ENCODE measurements at regions of chr7 and their contacts with region 1.

Region 1: DNA sequence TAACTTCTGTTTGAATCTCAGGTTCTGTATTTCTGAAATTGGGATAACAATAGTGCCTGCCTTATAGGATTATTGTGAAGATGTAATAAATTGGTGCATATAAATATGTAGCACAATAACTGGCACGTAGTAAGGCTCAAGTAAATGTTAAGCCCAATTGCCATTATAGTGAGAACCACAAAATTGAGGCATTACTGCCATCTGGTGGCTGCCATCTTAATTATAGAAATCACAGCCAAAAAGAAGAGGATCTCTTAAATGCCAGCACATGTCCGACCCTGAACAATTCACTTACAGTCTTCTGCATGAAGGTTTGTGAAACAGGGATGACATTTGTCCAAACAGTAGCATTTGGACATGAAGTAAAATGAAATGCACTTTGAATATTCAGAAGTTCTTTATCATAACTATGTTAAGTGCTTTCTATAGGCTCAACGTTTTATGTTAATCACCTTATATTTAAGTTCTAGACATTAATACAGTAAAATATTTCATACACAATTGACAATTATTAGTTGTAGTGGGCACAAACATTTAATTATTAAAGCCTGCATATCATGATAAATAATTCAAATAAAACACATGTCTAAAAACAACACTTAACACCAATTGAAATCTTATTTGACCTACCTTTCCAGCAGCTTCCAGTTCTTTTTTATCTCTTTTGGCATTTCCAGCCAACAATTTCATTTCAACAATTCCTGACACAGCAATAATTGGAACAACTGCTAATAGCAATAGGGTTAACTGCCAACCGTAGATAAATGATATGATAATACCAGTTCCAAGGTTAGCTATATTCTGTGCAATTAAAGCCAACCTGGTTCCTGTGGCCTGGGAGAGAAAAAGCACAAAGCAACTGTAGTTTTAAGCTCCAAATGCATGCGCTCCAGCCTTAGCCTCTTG is 58.5 kb downstream of the ABCB4 start:
- DNase-seq: peak; percentile 69
- ATAC-seq: peak; percentile 22; the same call in 1 of the 2 replicates
- H3K4me3 ChIP-seq: no peak overlapping the region
- H3K27ac ChIP-seq: no peak overlapping the region
- H3K4me1 ChIP-seq: peaks cover 12% of the 10 kb centered on the region
- H3K27me3 ChIP-seq: peaks cover 2% of the 10 kb centered on the region; the same call in 1 of the 2 replicates
- CTCF ChIP-seq: peak; percentile 85
- POLR2A ChIP-seq: no peak
- RAD21 ChIP-seq: peak; percentile 89

Region 2: DNA sequence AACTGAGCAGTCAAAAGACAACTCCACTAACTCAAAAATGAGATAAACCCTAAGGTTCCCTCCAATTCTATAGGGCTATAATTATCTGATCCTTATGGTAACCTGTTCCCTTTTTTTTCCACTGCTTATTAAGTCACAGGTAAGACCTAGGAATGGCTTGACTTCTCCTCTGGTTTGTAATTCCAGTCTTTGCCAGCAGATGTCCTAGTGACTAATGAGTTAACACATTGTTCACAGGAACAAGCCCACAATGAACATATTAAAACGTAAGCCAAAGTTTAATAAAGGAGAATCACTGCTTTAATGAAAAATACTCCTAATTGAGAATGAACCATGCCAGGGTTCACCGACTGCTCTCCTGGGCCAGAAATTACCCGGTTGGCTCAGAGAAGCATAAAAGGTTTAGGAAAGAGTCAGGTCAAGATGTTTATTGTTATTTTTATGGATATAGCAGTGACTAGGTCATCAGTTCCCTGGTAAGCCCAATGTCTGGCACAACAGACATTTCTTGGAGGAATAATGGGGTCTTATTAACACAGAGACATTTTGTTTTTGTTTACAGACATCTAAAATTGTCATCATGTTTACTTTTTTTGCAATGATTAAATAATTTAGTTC is 477.6 kb before region 1 on chr7:
- CTCF ChIA-PET with region 1: interaction called, 4 read pairs
- POLR2A ChIA-PET with region 1: no interaction called
- dilution Hi-C with region 1: no loop called
- in situ Hi-C with region 1: loop called (anchors 25 kb)
- intact Hi-C with region 1: loop called (anchors 5 kb)
- DNase-seq: peak; percentile 60
- ATAC-seq: peak; percentile 85
- H3K4me3 ChIP-seq: no peak overlapping the region
- H3K27ac ChIP-seq: no peak overlapping the region
- H3K4me1 ChIP-seq: no peaks in the 10 kb centered on the region
- H3K27me3 ChIP-seq: no peaks in the 10 kb centered on the region
- CTCF ChIP-seq: peak; percentile 62
- POLR2A ChIP-seq: no peak
- RAD21 ChIP-seq: peak; percentile 50

Region 3: GRCh38 chr7:87234949-87235348 is 182.0 kb before region 1 on chr7:
- CTCF ChIA-PET with region 1: no interaction called
- POLR2A ChIA-PET with region 1: no interaction called
- dilution Hi-C with region 1: no loop called
- in situ Hi-C with region 1: no loop called
- intact Hi-C with region 1: loop called (anchors 1 kb)
- DNase-seq: peak; percentile 60
- ATAC-seq: peak; percentile 90
- H3K4me3 ChIP-seq: no peak overlapping the region
- H3K27ac ChIP-seq: no peak overlapping the region
- H3K4me1 ChIP-seq: peaks cover 6% of the 10 kb centered on the region
- H3K27me3 ChIP-seq: peaks cover 13% of the 10 kb centered on the region
- CTCF ChIP-seq: no peak
- POLR2A ChIP-seq: no peak
- RAD21 ChIP-seq: no peak

Region 4: GRCh38 chr7:87345166-87345927 is 71.6 kb before region 1 on chr7 and contains the start of gene CROT:
- CTCF ChIA-PET with region 1: interaction called, 3 read pairs
- POLR2A ChIA-PET with region 1: no interaction called
- dilution Hi-C with region 1: no loop called
- in situ Hi-C with region 1: no loop called
- intact Hi-C with region 1: loop called (anchors 1 kb)
- DNase-seq: peak; percentile 91
- ATAC-seq: peak; percentile 99
- H3K4me3 ChIP-seq: peak within 1 kb of the TSS; percentile 68
- H3K27ac ChIP-seq: peak within 1 kb of the TSS; percentile 88
- H3K4me1 ChIP-seq: peaks cover 3% of the 10 kb centered on the region
- H3K27me3 ChIP-seq: no peaks in the 10 kb centered on the region
- CTCF ChIP-seq: no peak
- POLR2A ChIP-seq: no peak
- RAD21 ChIP-seq: no peak
- total RNA-seq, gene CROT: 7.5 and 14.4 TPM in 2 replicates